PC-9 (cell line): ENCODE measurements at regions of chr2 and their contacts with region 1.

Region 1: DNA sequence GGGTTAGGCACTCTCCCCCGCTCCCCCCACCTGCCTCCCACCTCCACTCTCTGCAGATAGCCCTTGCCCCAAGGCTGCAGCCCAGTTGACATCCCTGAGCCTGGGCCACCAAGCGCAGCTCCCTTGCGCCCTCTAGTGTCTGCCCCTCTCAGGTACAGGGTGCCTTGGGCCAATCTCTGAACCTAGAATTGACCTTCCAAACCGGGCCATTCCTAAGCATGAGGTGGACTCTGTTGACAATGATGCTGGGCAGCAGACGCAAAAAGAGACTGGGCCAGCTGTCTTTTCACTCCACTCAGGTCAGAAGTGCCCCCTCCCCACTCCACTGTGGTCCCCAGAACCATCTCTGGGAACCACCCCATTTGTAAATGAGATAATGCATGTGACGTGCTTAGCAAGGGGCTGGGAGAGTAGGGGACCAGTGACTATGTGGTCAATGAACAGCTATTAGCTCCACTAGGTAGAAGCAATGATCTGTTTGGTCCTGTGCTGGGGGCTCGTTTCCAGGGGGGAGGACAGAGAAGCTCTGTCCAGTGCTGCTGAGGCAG is 43.3 kb upstream of the PLB1 start:
- DNase-seq: peak in 1 of 2 experiments; percentile 75
- H3K4me3 ChIP-seq: no peak overlapping the region
- H3K27ac ChIP-seq: no peak overlapping the region
- H3K4me1 ChIP-seq: peaks cover 44% of the 10 kb centered on the region
- H3K27me3 ChIP-seq: no peaks in the 10 kb centered on the region
- CTCF ChIP-seq: peak; percentile 97

Region 2: DNA sequence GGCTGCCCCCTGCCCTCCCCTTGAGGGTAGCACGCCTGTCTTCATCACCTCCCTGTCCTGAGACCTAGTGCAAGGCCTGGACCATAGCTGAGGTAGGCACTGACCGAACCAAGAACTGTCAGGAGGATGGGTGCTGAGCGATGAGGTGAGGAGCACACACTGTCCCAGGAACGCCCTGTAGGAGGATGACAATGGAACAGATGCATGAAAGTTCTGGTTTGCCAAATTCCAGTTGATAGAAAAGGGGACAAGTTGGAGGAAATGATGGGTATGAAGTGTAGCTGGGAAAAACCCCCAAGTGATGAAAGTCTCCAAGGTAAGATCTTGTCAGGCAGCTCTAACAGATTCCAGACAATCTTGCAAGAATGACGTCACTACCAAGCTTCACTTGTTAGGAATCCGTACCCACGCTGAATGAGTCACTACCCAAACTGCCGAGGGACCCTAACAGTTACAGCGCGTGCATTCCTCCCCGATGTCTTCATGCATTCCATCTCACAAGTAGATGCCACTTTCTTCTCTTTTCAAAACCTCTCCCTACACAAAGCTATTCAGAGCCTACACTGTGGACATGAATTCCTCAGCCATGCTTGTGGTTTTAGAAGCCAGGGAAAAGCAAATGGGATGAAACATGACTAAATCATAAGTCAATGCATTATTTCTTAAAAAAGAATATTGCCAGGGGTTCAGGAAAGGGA is 653.5 kb before region 1 on chr2:
- CTCF ChIA-PET with region 1: no interaction called
- POLR2A ChIA-PET with region 1: no interaction called
- intact Hi-C with region 1: loop called (anchors 2 kb)
- DNase-seq: peak; percentile 89 to 100
- H3K4me3 ChIP-seq: peak overlapping the region; percentile 3; the same call in 1 of the 2 replicates
- H3K27ac ChIP-seq: peak overlapping the region; percentile 94
- H3K4me1 ChIP-seq: peaks cover 40% of the 10 kb centered on the region
- H3K27me3 ChIP-seq: no peaks in the 10 kb centered on the region
- CTCF ChIP-seq: no peak

Region 3: DNA sequence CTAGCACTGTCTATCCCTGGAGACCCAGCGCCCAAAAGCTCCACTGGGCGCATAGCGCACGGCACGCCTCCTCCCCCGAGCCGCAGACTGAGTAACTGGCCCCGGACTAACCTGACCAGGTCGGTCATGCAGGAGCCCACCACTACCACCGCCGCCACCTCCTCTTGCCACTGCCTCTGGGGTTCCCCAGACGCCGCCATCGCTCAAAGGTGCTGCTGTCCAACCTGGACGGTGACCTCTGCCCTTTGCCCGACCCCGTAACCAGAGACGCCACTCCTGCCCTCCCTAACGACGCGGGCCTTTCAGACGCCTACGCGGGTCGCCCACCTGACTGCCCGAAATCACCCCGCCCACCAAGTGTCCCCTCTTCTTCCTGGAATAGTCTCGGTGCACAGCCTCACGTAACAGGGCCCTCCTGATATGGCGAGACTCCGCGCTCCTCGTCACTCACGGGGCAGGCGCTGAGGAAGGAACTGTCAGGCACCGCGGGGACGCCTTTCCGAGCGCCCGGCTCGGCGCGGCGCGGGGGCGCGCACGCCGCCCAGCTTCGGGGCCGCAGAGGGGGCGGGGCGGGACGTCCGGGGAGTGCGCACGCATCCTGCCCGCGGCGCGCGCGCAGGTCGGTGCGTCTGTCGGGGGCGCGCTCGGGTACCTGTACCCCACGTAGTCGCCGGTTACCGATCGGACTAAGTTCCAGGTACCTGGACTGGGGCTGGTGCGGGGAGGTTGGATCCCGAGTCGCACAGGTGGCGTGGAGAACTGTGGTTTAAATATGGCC is 562.3 kb before region 1 on chr2 and contains the starts of genes BABAM2 and RBKS:
- CTCF ChIA-PET with region 1: no interaction called
- POLR2A ChIA-PET with region 1: no interaction called
- intact Hi-C with region 1: loop called (anchors 5 kb)
- DNase-seq: peak; percentile 75 to 91
- H3K4me3 ChIP-seq: peak within 1 kb of the TSS; percentile 81
- H3K27ac ChIP-seq: peak within 1 kb of the TSS; percentile 96
- H3K4me1 ChIP-seq: peaks cover 41% of the 10 kb centered on the region
- H3K27me3 ChIP-seq: no peaks in the 10 kb centered on the region
- CTCF ChIP-seq: no peak
- total RNA-seq, gene BABAM2: 45.9 and 46.1 TPM in 2 replicates
- total RNA-seq, gene RBKS: 4.5 and 6.8 TPM in 2 replicates

Region 4: DNA sequence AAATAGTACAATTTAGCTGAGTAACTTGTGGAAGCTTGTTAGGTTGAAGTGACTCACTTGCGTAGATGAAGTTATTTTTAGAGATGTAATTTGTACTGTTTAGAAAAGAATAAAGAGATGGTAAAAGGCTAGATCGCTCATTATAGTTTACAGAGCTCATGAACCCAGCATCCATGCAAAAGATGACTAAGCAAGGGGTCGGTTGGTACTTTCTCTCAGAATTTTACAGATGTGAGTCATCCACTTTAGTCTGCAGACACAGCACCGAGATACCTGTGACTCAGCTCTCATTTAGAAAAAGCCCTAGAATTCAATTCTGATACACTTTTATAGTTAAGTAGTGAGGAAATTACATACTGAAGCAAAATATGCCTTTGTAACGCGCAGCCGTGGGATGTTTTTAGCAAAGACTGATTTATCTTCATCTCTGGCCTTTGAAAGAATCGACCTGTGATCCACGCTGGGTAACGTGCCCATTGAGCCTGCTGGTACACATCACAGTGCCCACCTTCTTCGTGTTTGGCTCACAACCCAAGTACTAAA is 176.5 kb before region 1 on chr2:
- CTCF ChIA-PET with region 1: no interaction called
- POLR2A ChIA-PET with region 1: no interaction called
- intact Hi-C with region 1: loop called (anchors 5 kb)
- DNase-seq: peak; percentile 38 to 96
- H3K4me3 ChIP-seq: peak overlapping the region; percentile 30; the same call in 1 of the 2 replicates
- H3K27ac ChIP-seq: peak overlapping the region; percentile 90
- H3K4me1 ChIP-seq: peaks cover 91% of the 10 kb centered on the region
- H3K27me3 ChIP-seq: no peaks in the 10 kb centered on the region
- CTCF ChIP-seq: no peak

Region 5: DNA sequence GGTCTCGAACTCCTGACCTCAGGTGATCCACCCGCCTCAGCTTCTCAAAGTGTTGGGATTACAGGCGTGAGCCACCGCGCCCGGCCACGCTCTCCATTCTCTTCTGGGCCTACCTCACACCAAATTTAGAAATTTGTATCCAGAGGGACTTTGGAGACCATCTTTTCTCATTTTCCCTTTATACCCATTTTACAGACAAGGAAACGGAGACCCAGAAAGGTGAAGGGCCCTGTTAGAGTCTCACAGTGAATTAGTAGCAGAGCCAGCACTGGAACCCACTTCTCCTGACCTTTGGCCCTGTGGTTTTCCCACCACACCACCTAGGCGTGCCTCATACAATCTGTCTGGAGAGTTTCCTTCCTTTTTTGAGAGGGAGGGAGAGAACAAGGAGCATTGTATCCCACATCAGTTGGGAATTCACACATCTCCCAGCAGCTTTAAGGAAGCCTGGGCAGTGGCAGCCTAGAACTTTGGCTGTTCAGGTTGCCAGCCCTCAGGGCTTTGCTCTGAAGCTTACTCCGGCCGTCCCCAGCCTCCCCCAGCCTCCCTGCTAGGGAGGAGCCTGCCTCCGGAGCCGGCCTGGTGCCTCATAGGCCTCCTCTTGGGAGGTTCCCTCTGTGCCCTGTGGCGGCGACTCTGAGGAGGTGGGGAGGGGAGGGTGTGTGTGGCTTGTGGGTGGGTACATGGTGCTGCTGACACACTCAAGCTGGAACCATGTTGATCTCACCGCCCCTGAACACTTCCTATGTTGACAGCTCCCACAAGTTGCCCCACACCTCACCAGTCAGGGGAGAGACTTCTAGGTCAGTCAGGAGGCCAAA is 46.1 kb before region 1 on chr2:
- CTCF ChIA-PET with region 1: no interaction called
- POLR2A ChIA-PET with region 1: no interaction called
- intact Hi-C with region 1: loop called (anchors 1 kb)
- DNase-seq: peak in 1 of 2 experiments; percentile 84
- H3K4me3 ChIP-seq: no peak overlapping the region
- H3K27ac ChIP-seq: peak overlapping the region; percentile 23; the same call in 1 of the 2 replicates
- H3K4me1 ChIP-seq: no peaks in the 10 kb centered on the region
- H3K27me3 ChIP-seq: no peaks in the 10 kb centered on the region
- CTCF ChIP-seq: no peak

Region 6: DNA sequence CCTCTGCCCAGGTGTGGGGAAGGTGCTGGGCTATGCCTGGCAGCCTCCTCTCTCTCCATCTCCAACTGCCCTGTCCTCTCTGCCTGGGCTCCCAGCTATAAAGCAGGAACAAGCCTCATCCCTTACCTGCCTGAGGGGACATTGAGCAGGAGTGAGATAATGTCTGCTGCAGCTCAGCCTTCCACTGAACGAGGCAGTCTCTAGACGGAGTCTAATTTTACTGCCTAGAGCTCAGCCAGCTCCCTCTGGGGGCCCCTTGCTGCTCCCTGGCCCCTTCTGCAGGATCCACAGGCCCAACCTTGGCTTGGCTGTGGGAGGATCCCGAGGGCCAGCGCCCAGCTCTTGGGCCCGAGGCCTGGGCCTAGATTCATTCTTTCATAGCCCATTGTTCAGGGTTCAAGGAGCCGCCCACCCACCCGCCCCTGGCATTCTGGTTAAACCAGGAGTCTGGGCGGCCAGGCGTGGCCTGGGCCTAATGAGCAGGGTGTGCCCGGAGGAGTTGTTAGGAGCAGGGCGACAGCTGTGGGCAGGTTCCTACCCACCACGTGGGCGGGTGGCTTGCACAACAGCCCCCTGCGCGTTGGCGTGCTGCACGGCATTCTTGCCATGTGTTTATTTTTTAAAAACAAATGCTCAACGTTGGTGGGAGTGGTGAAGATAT is 15.3 kb before region 1 on chr2:
- CTCF ChIA-PET with region 1: no interaction called
- POLR2A ChIA-PET with region 1: no interaction called
- intact Hi-C with region 1: loop called (anchors 1 kb)
- DNase-seq: peak; percentile 82 to 90
- H3K4me3 ChIP-seq: peak overlapping the region; percentile 27; the same call in 1 of the 2 replicates
- H3K27ac ChIP-seq: peak overlapping the region; percentile 93
- H3K4me1 ChIP-seq: peaks cover 39% of the 10 kb centered on the region
- H3K27me3 ChIP-seq: no peaks in the 10 kb centered on the region
- CTCF ChIP-seq: no peak

Region 7: GRCh38 chr2:28552045-28552823 is 99.6 kb after region 1 on chr2:
- CTCF ChIA-PET with region 1: no interaction called
- POLR2A ChIA-PET with region 1: no interaction called
- intact Hi-C with region 1: no loop called
- DNase-seq: peak in 1 of 2 experiments; percentile 18
- H3K4me3 ChIP-seq: no peak overlapping the region
- H3K27ac ChIP-seq: no peak overlapping the region
- H3K4me1 ChIP-seq: peaks cover 7% of the 10 kb centered on the region; the same call in 1 of the 2 replicates
- H3K27me3 ChIP-seq: no peaks in the 10 kb centered on the region
- CTCF ChIP-seq: no peak